Naive thymus-derived CD4-positive, alpha-beta T cell (primary cell): ENCODE measurements at regions of chr21 and their contacts with region 1.

Region 1: DNA sequence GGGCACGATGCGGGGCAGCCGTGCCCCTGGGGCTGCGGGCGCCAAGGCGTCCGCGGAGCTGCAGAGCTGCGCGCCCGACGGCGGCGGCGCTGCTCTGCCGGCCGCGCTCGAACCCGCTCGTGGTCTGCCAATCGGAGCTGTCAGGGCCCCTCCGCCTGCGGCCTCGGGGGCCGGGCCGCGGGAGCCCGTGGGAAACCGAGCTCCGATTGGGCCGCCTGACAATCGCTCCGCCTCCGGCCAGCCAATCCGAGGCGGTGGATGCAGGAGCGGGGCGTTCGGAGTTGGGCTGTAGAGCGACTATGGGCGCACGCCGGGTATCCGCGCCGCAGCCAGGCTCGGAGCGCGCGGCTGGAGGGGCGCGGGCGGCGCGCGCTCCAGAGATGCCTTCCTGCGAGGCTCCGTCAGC is 100.5 kb upstream of the SOD1 start:
- DNase-seq: peak; percentile 85 to 96 (median 92)
- ATAC-seq: peak; percentile 94
- H3K4me3 ChIP-seq: peak overlapping the region; percentile 82
- H3K4me3 Mint-ChIP-seq: peak overlapping the region; percentile 87 to 98 (median 94)
- H3K27ac ChIP-seq: peak overlapping the region; percentile 52
- H3K27ac Mint-ChIP-seq: peak overlapping the region in 4 of 9 donors; percentile 45 to 75 (median 65)
- H3K4me1 ChIP-seq: peaks cover 3 to 5% of the 10 kb centered on the region in 2 donors
- H3K4me1 Mint-ChIP-seq: peaks cover 18 to 51% (median 34%) of the 10 kb centered on the region in 7 donors
- H3K27me3 ChIP-seq: no peaks in the 10 kb centered on the region
- H3K27me3 Mint-ChIP-seq: peaks cover 6 to 47% (median 25%) of the 10 kb centered on the region in 5 donors

Region 2: DNA sequence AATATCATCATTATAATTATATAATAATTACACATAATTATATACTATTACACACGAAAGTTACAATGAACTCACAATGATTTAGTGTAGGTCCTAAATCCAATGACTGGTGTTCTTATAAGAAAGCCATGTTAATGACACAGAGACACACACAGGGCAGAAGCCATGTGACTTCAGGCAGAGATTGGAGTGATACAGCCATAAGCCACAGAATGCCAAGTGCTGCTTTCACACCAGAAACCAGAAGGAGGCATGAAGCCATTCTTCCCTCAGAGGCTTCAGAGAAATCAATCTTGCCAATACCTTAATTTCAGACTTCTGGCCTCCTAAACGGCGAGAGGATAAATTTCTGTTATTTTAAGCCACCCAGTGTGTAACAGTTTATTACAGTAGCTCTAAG is 373.3 kb before region 1 on chr21:
- CTCF ChIA-PET with region 1: interaction called, 5 read pairs
- POLR2A ChIA-PET with region 1: interaction called, 4 read pairs
- intact Hi-C with region 1: loop called (anchors 1 to 2 kb)
- DNase-seq: peak in 5 of 9 donors; percentile 18 to 48 (median 34)
- ATAC-seq: peak; percentile 38
- H3K4me3 ChIP-seq: peak overlapping the region; percentile 76
- H3K4me3 Mint-ChIP-seq: peak overlapping the region; percentile 81 to 96 (median 94)
- H3K27ac ChIP-seq: peak overlapping the region; percentile 69
- H3K27ac Mint-ChIP-seq: peak overlapping the region; percentile 89 to 99 (median 96)
- H3K4me1 ChIP-seq: peaks cover 16 to 71% of the 10 kb centered on the region in 2 donors
- H3K4me1 Mint-ChIP-seq: peaks cover 33 to 82% (median 79%) of the 10 kb centered on the region in 7 donors
- H3K27me3 ChIP-seq: no peaks in the 10 kb centered on the region
- H3K27me3 Mint-ChIP-seq: no peaks in the 10 kb centered on the region

Region 3: DNA sequence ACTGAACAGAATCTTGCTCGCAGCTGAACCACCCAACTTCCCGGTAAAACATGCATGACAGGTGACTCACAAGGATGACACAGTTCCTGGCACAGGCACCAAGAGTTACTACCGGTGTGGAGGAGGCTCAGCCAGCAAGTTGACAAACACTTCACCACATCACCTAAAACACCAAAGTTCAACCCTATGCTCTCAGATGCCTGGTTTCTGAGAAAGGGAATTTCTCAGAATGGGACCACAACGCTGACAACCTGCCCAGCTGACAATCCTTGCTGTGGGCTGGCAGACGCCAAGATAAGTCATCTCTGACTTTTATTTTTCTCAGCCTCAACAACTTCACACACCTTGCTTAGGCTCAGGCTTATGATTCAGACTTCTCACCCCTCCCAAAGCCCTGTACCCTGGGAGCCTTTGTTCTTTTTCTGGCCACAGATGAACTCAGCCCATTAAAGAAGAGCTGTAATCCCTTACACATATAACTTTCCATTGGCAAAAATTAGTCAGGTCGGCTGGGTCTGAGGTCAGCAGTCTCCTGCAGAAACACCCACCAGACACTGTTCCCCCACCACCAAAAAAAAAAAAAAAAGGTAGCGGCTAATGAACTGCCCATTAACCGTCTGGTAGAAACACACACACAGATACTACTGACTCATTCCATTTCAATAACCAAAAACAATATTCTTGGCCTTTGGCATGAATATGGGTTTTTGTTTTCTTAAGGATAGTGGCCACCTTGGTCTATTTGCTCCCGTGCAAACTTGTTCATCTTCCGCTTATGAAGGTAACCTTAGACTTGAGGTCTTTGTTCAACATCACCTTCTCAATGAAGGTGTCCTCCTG is 204.1 kb before region 1 on chr21:
- CTCF ChIA-PET with region 1: no interaction called
- POLR2A ChIA-PET with region 1: no interaction called
- intact Hi-C with region 1: loop called (anchors 1 to 5 kb)
- DNase-seq: peak; percentile 17 to 85 (median 76)
- ATAC-seq: peak; percentile 92
- H3K4me3 ChIP-seq: no peak overlapping the region
- H3K4me3 Mint-ChIP-seq: peak overlapping the region; percentile 4 to 74 (median 60)
- H3K27ac ChIP-seq: peak overlapping the region; percentile 46
- H3K27ac Mint-ChIP-seq: peak overlapping the region; percentile 48 to 95 (median 70)
- H3K4me1 ChIP-seq: peaks cover 8 to 28% of the 10 kb centered on the region in 2 donors
- H3K4me1 Mint-ChIP-seq: peaks cover 11 to 52% (median 43%) of the 10 kb centered on the region in 7 donors
- H3K27me3 ChIP-seq: no peaks in the 10 kb centered on the region
- H3K27me3 Mint-ChIP-seq: no peaks in the 10 kb centered on the region

Region 4: GRCh38 chr21:31446226-31446855 is 112.6 kb before region 1 on chr21:
- CTCF ChIA-PET with region 1: no interaction called
- POLR2A ChIA-PET with region 1: no interaction called
- intact Hi-C with region 1: loop called in 1 of 2 experiments (anchors 2 kb)
- DNase-seq: peak in 7 of 9 donors; percentile 12 to 66 (median 55)
- ATAC-seq: peak; percentile 86
- H3K4me3 ChIP-seq: peak overlapping the region; percentile 38
- H3K4me3 Mint-ChIP-seq: peak overlapping the region; percentile 38 to 86 (median 74)
- H3K27ac ChIP-seq: no peak overlapping the region
- H3K27ac Mint-ChIP-seq: peak overlapping the region; percentile 4 to 92 (median 33)
- H3K4me1 ChIP-seq: peaks cover 14 to 22% of the 10 kb centered on the region in 2 donors
- H3K4me1 Mint-ChIP-seq: peaks cover 26 to 58% (median 41%) of the 10 kb centered on the region in 7 donors
- H3K27me3 ChIP-seq: no peaks in the 10 kb centered on the region
- H3K27me3 Mint-ChIP-seq: peaks cover 0 to 7% (median 0%) of the 10 kb centered on the region in 5 donors

Region 5: GRCh38 chr21:31580866-31581276 is 21.9 kb after region 1 on chr21:
- CTCF ChIA-PET with region 1: interaction called, 18 read pairs
- POLR2A ChIA-PET with region 1: interaction called, 7 read pairs
- intact Hi-C with region 1: loop called in 1 of 2 experiments (anchors 1 kb)
- DNase-seq: peak; percentile 50 to 77 (median 66)
- ATAC-seq: peak; percentile 90
- H3K4me3 ChIP-seq: no peak overlapping the region
- H3K4me3 Mint-ChIP-seq: no peak overlapping the region
- H3K27ac ChIP-seq: no peak overlapping the region
- H3K27ac Mint-ChIP-seq: peak overlapping the region in 3 of 9 donors; percentile 10 to 76 (median 32)
- H3K4me1 ChIP-seq: no peaks in the 10 kb centered on the region
- H3K4me1 Mint-ChIP-seq: peaks cover 0 to 8% (median 4%) of the 10 kb centered on the region in 7 donors
- H3K27me3 ChIP-seq: no peaks in the 10 kb centered on the region
- H3K27me3 Mint-ChIP-seq: peaks cover 0 to 25% (median 0%) of the 10 kb centered on the region in 5 donors

Region 6: DNA sequence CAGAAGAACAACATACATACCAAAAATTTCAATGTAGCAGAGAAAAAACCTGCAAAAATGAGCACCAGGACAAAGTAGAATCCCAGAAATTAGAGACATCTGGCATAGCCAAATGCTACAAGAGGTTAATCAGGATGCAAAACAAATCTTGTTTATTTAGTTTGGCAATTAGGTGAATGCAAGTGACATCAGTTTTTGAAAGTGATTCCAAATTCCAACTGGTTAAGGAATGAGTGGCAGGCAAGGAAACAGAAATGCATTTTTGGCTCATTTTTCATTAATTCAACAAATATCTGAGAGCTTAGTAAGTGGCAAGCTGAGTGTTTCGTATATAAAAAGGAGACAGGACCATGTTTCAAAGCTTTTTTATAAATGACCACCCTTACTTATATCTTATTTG is 151.6 kb after region 1 on chr21:
- CTCF ChIA-PET with region 1: no interaction called
- POLR2A ChIA-PET with region 1: no interaction called
- intact Hi-C with region 1: no loop called
- DNase-seq: no peak
- ATAC-seq: no peak
- H3K4me3 ChIP-seq: no peak overlapping the region
- H3K4me3 Mint-ChIP-seq: peak overlapping the region in 2 of 10 donors; percentile 35 to 41
- H3K27ac ChIP-seq: no peak overlapping the region
- H3K27ac Mint-ChIP-seq: peak overlapping the region in 4 of 9 donors; percentile 37 to 67 (median 54)
- H3K4me1 ChIP-seq: peaks cover 13 to 27% of the 10 kb centered on the region in 2 donors
- H3K4me1 Mint-ChIP-seq: peaks cover 51 to 91% (median 86%) of the 10 kb centered on the region in 7 donors
- H3K27me3 ChIP-seq: no peaks in the 10 kb centered on the region
- H3K27me3 Mint-ChIP-seq: no peaks in the 10 kb centered on the region

Region 7: DNA sequence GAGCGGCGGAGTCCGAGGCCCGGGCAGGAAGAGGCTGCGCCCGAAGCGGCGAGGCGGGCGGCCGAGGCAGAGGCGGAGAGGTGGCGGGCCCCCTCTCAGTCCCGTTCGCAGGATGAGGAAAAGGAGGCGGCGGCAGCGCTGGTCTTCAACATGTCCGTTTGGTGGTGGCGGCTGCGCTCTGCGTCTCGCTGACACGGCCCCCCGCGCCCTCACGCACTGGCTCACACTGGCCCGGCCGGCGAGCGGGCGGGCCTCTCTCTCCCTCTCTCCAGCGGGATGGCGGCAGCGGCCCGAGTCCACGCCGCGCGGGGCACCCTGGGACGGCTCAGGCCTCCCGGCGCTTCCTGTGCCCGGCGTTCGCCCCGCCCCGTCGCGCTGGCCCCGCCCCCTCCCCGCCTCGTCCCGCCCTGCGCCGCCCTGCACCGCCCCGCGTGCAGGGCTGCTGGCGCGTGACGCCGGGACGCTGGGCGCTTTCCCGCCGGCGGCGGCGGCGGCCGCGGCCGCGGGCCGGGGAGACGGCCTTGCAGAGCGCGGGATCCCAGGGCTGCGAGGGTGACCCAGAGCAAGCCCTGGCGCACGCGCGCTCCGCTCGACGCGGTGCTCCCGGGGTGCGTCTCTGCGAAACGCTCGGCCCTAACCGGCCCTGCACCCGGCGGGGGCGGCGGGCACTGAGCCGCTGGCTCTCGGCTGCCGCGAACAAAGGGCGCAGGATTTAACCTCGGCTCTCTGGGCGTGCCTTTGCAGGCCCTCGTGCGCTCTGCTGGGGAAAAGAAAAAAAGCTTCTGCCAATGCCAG is 173.0 kb after region 1 on chr21 and contains the start of gene SCAF4:
- CTCF ChIA-PET with region 1: no interaction called
- POLR2A ChIA-PET with region 1: no interaction called
- intact Hi-C with region 1: loop called (anchors 1 to 5 kb)
- DNase-seq: peak; percentile 64 to 86 (median 72)
- ATAC-seq: peak; percentile 95
- H3K4me3 ChIP-seq: peak within 1 kb of the TSS; percentile 80
- H3K4me3 Mint-ChIP-seq: peak within 1 kb of the TSS in 6 of 10 donors; percentile 67 to 94 (median 90)
- H3K27ac ChIP-seq: peak within 1 kb of the TSS; percentile 95
- H3K27ac Mint-ChIP-seq: peak within 1 kb of the TSS; percentile 32 to 96 (median 83)
- H3K4me1 ChIP-seq: peaks cover 24 to 39% of the 10 kb centered on the region in 2 donors
- H3K4me1 Mint-ChIP-seq: peaks cover 13 to 19% (median 15%) of the 10 kb centered on the region in 7 donors
- H3K27me3 ChIP-seq: no peaks in the 10 kb centered on the region
- H3K27me3 Mint-ChIP-seq: peaks cover 0 to 2% (median 0%) of the 10 kb centered on the region in 5 donors
- total RNA-seq, gene SCAF4: 54.8 to 69.7 (median 64.7) TPM

Region 8: GRCh38 chr21:31781737-31782136 is 222.8 kb after region 1 on chr21:
- CTCF ChIA-PET with region 1: no interaction called
- POLR2A ChIA-PET with region 1: no interaction called
- intact Hi-C with region 1: no loop called
- DNase-seq: no peak
- ATAC-seq: no peak
- H3K4me3 ChIP-seq: no peak overlapping the region
- H3K4me3 Mint-ChIP-seq: no peak overlapping the region
- H3K27ac ChIP-seq: no peak overlapping the region
- H3K27ac Mint-ChIP-seq: no peak overlapping the region
- H3K4me1 ChIP-seq: no peaks in the 10 kb centered on the region
- H3K4me1 Mint-ChIP-seq: peaks cover 3 to 11% (median 4%) of the 10 kb centered on the region in 7 donors
- H3K27me3 ChIP-seq: no peaks in the 10 kb centered on the region
- H3K27me3 Mint-ChIP-seq: peaks cover 0 to 17% (median 13%) of the 10 kb centered on the region in 5 donors